CD4-positive, alpha-beta T cell (primary cell): ENCODE measurements at regions of chr12 and their contacts with region 1.

Region 1: DNA sequence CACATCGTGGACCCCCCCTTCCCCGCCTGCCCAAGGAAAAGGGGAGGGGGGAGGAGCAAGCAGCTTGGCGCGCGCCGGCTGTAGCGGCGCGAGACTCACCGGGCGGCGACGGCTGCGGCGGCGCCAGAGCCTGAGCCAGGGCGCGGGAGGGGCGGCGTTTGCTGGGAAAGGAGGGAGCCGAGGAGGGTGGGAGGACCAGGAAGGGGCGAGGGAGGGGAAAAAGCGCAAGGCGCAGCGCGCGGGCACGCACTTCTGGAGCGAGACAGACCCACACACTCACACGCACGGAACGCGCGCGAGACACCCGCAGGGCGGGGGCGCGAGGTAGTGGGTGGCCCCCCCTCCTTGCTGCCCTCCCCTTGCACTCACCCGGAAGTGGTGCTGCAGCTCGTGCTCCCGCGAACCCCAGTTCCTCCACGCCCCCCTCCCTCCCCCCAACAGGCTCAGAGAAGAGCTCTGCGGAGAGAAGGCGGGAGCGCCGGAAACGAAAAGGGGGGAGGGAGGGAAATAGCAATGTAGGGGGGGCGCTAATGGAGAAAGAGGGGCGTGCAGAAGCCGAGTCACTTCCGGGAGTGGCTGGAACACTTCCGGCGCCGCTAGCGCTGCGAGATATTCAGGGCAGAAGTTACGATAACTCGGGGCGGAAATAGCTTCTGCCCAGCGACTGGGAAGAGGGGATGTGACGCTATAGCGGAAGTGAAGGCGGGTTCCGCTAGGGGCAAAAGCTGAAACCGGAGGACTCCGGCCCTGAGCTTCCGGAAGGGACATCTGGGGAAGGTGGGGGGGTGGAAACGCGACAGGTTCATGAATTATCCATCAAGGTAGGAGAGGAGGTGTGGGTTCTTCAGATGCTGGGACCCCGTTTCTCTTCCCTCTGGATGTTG is at the start of gene ZNF384:
- DNase-seq: peak; percentile 90 to 99 (median 94)
- ATAC-seq: peak; percentile 79
- H3K4me3 ChIP-seq: peak within 1 kb of the TSS; percentile 88
- H3K4me3 Mint-ChIP-seq: peak within 1 kb of the TSS; percentile 89
- H3K27ac ChIP-seq: peak within 1 kb of the TSS; percentile 92 to 94
- H3K27ac Mint-ChIP-seq: peak within 1 kb of the TSS; percentile 93
- H3K4me1 ChIP-seq: peaks cover 51% of the 10 kb centered on the region
- H3K4me1 Mint-ChIP-seq: peaks cover 51% of the 10 kb centered on the region
- H3K27me3 ChIP-seq: no peaks in the 10 kb centered on the region
- H3K27me3 Mint-ChIP-seq: no peaks in the 10 kb centered on the region
- CTCF ChIP-seq: peak; percentile 30
- total RNA-seq, gene ZNF384: 67.6 TPM

Region 2: DNA sequence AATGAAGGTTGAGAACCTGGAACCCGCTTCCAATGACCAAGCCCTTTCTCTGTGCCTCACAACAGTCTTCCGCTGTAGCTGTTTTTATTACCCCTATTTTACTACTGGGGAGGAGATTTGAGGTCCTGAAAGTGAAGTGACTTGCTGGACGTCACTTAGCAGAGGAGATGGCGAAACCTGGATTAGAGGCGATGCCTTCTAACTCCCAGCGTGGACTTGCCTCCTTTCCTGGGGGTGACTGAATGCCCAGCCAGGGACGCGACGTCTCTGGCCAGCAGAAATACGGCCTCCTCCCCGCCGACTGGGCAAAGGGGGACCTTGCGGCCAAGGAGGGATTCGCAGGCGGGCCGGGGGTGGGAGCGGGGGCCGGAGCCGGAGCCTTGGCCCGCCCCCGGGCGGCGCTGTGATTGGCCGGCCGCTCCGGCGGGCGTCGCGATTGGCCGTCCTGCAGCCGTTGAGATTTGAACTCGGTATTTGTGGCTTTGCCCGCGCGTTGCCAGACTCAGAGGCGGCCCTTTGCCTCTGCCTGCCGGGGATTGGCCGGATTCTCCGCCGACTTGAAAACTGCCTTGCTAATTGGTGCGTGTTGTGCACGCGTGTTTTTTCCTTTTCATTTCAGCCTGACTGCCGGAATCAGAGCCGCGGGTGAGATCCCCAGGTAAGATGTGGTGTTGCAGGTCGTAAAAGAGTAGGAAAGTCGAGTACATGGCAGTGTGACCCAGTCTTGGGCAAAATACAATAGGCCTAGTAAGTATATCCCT is 195.6 kb before region 1 on chr12 and contains the start of gene NCAPD2:
- CTCF ChIA-PET with region 1: no interaction called
- POLR2A ChIA-PET with region 1: interaction called, 10 read pairs
- intact Hi-C with region 1: no loop called
- DNase-seq: peak; percentile 87 to 98 (median 92)
- ATAC-seq: peak; percentile 84
- H3K4me3 ChIP-seq: peak within 1 kb of the TSS; percentile 96
- H3K4me3 Mint-ChIP-seq: peak within 1 kb of the TSS; percentile 93
- H3K27ac ChIP-seq: peak within 1 kb of the TSS; percentile 89 to 94
- H3K27ac Mint-ChIP-seq: peak within 1 kb of the TSS; percentile 91
- H3K4me1 ChIP-seq: peaks cover 34% of the 10 kb centered on the region
- H3K4me1 Mint-ChIP-seq: peaks cover 48% of the 10 kb centered on the region
- H3K27me3 ChIP-seq: no peaks in the 10 kb centered on the region
- H3K27me3 Mint-ChIP-seq: no peaks in the 10 kb centered on the region
- CTCF ChIP-seq: no peak
- total RNA-seq, gene NCAPD2: 13.7 to 14.9 TPM

Region 3: GRCh38 chr12:6613776-6614512 is 75.3 kb before region 1 on chr12:
- CTCF ChIA-PET with region 1: interaction called, 6 read pairs
- POLR2A ChIA-PET with region 1: interaction called, 15 read pairs
- intact Hi-C with region 1: loop called (anchors 2 kb)
- DNase-seq: peak in 9 of 14 experiments; percentile 16 to 84 (median 46)
- ATAC-seq: peak; percentile 36
- H3K4me3 ChIP-seq: no peak overlapping the region
- H3K4me3 Mint-ChIP-seq: peak overlapping the region; percentile 31
- H3K27ac ChIP-seq: peak overlapping the region; percentile 40 to 47
- H3K27ac Mint-ChIP-seq: peak overlapping the region; percentile 84
- H3K4me1 ChIP-seq: peaks cover 43% of the 10 kb centered on the region
- H3K4me1 Mint-ChIP-seq: peaks cover 47% of the 10 kb centered on the region
- H3K27me3 ChIP-seq: no peaks in the 10 kb centered on the region
- H3K27me3 Mint-ChIP-seq: no peaks in the 10 kb centered on the region
- CTCF ChIP-seq: no peak

Region 4: DNA sequence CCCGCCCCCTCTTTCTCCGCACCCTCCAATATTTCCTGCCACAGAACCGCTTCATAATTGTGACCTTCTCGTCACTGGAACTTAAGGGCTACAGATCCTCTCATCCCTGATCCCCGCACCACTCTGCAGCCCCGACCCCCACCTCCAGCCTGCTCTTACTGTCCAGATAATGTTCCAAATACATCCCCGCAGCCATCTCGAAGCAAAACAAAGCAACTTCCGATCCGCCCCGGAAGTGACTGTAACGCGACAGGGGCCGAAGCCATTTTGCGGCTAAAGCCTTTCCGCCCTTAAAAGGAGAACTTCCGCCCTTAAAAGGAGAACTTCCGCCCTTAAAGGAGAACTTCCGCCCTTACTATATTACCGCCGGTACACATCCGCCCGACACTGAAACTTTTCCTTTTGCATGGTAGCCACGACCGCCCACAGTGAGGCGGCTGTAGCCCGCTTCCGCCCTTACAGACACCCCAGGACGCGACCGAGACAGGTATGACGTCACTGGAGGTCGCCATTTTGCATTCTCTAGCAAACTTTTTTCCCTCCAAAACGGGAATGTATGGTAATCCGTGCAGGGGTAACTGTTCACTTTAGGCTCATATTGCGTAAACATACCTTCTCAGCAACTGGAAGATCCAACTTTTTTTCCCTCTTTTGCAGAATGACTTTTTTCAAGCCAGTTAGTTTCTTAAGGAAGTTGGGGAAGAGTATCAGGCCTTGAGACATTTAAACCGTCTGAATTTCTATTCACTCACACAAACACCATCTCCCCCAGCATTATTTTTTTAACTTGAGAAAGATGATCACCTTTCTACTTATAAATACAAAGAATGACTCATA is 26.1 kb before region 1 on chr12 and contains the start of gene ING4:
- CTCF ChIA-PET with region 1: interaction called, 7 read pairs
- POLR2A ChIA-PET with region 1: interaction called, 37 read pairs
- intact Hi-C with region 1: loop called (anchors 1 kb)
- DNase-seq: peak; percentile 88 to 99 (median 94)
- ATAC-seq: peak; percentile 97
- H3K4me3 ChIP-seq: peak within 1 kb of the TSS; percentile 82
- H3K4me3 Mint-ChIP-seq: peak within 1 kb of the TSS; percentile 95
- H3K27ac ChIP-seq: peak within 1 kb of the TSS; percentile 79 to 89
- H3K27ac Mint-ChIP-seq: peak within 1 kb of the TSS; percentile 91
- H3K4me1 ChIP-seq: peaks cover 29% of the 10 kb centered on the region
- H3K4me1 Mint-ChIP-seq: peaks cover 34% of the 10 kb centered on the region
- H3K27me3 ChIP-seq: no peaks in the 10 kb centered on the region
- H3K27me3 Mint-ChIP-seq: no peaks in the 10 kb centered on the region
- CTCF ChIP-seq: no peak
- total RNA-seq, gene ING4: 13.8 to 17.4 TPM

Region 5: GRCh38 chr12:6752921-6753771 is 63.9 kb after region 1 on chr12 and contains the start of gene MLF2:
- CTCF ChIA-PET with region 1: interaction called, 4 read pairs
- POLR2A ChIA-PET with region 1: interaction called, 43 read pairs
- intact Hi-C with region 1: loop called in 1 of 2 experiments (anchors 2 kb)
- DNase-seq: peak; percentile 94 to 99 (median 96)
- ATAC-seq: peak; percentile 92
- H3K4me3 ChIP-seq: peak within 1 kb of the TSS; percentile 80
- H3K4me3 Mint-ChIP-seq: peak within 1 kb of the TSS; percentile 96
- H3K27ac ChIP-seq: peak within 1 kb of the TSS; percentile 86 to 96
- H3K27ac Mint-ChIP-seq: peak within 1 kb of the TSS; percentile 100
- H3K4me1 ChIP-seq: peaks cover 24% of the 10 kb centered on the region
- H3K4me1 Mint-ChIP-seq: peaks cover 19% of the 10 kb centered on the region
- H3K27me3 ChIP-seq: no peaks in the 10 kb centered on the region
- H3K27me3 Mint-ChIP-seq: no peaks in the 10 kb centered on the region
- CTCF ChIP-seq: peak; percentile 79
- total RNA-seq, gene MLF2: 114 to 121 TPM

Region 6: DNA sequence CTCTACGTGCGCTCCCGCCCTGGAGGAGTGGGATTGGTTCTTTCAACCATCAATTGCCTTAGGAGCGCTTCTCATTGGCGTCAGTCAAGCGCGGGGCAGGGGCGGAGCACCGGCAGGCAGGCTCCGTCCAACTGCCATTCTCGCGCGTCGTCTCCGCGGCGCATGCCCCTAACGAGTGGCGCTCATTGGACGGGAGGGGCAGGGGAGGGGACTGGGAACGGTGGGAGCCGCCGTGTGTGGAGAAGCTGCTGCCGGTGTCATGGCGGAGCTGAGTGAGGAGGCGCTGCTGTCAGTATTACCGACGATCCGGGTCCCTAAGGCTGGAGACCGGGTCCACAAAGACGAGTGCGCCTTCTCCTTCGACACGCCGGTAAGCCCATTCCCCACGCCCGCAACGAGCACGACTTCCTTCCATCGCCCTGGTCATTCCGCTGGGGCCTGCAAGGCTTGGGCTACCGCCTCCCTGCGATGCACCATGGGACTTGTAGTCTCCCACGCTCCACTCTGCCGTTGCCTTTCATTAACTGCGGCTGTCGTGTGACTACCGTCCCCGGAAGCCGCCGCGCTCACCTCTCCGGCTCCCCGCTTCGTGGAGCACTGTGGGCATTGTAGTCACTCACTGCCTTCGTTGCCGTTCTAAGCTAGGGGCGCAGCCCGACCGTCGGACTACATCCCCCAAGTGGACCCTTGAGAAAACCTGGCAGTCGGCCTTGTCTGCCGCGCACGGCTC is 162.8 kb after region 1 on chr12 and contains the start of gene USP5:
- CTCF ChIA-PET with region 1: interaction called, 3 read pairs
- POLR2A ChIA-PET with region 1: interaction called, 43 read pairs
- intact Hi-C with region 1: loop called in 1 of 2 experiments (anchors 2 kb)
- DNase-seq: peak; percentile 94 to 100 (median 97)
- ATAC-seq: peak; percentile 77
- H3K4me3 ChIP-seq: peak within 1 kb of the TSS; percentile 73
- H3K4me3 Mint-ChIP-seq: peak within 1 kb of the TSS; percentile 91
- H3K27ac ChIP-seq: peak within 1 kb of the TSS; percentile 89 to 95
- H3K27ac Mint-ChIP-seq: peak within 1 kb of the TSS; percentile 87
- H3K4me1 ChIP-seq: peaks cover 42% of the 10 kb centered on the region
- H3K4me1 Mint-ChIP-seq: peaks cover 29% of the 10 kb centered on the region
- H3K27me3 ChIP-seq: no peaks in the 10 kb centered on the region
- H3K27me3 Mint-ChIP-seq: no peaks in the 10 kb centered on the region
- CTCF ChIP-seq: no peak
- total RNA-seq, gene USP5: 31.8 to 33.4 TPM

Region 7: DNA sequence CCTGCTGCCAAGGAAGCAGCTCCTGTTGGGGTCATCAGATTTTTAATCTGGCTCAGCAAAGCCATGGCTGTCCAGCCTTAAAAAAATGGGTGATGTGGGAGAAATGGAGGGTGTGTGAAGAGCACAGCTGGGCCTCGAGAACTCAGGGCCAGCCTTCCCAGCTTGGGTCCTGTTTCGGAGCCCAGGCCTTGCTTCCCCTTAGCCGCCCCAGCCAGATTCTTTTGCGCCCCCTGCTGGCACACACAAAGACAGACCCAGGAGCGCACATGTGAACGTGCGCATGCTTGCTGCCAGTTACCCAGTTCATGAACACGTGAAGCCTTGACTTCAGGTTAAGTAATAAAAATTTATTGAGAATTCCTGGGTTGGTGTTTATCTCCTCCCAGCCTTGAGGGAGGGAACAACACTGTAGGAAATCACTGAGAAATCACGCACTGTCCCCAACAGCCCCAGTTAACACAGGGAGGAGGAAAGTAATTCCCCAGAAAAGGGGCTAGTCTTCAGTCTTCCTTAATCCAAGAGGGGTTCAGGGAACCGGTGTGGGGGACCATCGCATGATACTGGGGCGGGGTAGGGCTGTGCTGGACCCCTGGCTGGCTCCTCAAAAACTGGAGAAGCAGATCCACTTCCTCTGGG is 275.9 kb after region 1 on chr12:
- CTCF ChIA-PET with region 1: no interaction called
- POLR2A ChIA-PET with region 1: interaction called, 7 read pairs
- intact Hi-C with region 1: loop called in 1 of 2 experiments (anchors 2 kb)
- DNase-seq: peak; percentile 83 to 96 (median 86)
- ATAC-seq: peak; percentile 50
- H3K4me3 ChIP-seq: no peak overlapping the region
- H3K4me3 Mint-ChIP-seq: peak overlapping the region; percentile 79
- H3K27ac ChIP-seq: peak overlapping the region; percentile 38 to 39
- H3K27ac Mint-ChIP-seq: peak overlapping the region; percentile 90
- H3K4me1 ChIP-seq: peaks cover 70% of the 10 kb centered on the region
- H3K4me1 Mint-ChIP-seq: peaks cover 58% of the 10 kb centered on the region
- H3K27me3 ChIP-seq: no peaks in the 10 kb centered on the region
- H3K27me3 Mint-ChIP-seq: no peaks in the 10 kb centered on the region
- CTCF ChIP-seq: peak; percentile 94